CD8-positive, alpha-beta T cell (primary cell): ENCODE measurements at regions of chr15 and their contacts with region 1.

Region 1: DNA sequence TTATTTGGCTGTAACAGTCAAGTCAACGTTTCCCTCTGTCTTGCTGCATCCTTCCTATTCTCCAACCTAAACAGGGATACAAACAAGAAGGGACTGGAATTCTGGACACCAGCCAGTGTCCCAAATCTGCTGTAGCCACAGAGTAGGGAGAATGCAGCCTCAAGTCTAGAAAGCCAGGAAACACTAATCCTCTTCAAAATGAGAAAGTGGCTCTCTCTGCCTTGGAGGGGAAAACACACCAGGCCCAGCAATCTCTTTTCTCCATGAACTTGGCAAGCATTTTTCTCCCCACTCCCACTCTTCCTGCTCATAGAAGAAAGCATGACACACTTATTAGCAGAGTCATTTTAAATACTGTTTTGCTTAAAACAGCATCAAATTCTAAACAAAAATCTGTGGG is 781.7 kb downstream of the SQOR start:
- DNase-seq: no peak
- ATAC-seq: no peak
- H3K4me3 ChIP-seq: no peak overlapping the region
- H3K4me3 Mint-ChIP-seq: no peak overlapping the region
- H3K27ac ChIP-seq: no peak overlapping the region
- H3K27ac Mint-ChIP-seq: no peak overlapping the region
- H3K4me1 ChIP-seq: no peaks in the 10 kb centered on the region
- H3K4me1 Mint-ChIP-seq: no peaks in the 10 kb centered on the region
- H3K27me3 ChIP-seq: no peaks in the 10 kb centered on the region
- H3K27me3 Mint-ChIP-seq: no peaks in the 10 kb centered on the region
- CTCF ChIP-seq: no peak

Region 2: GRCh38 chr15:46354443-46354842 is 62.1 kb before region 1 on chr15:
- CTCF ChIA-PET with region 1: no interaction called
- POLR2A ChIA-PET with region 1: no interaction called
- intact Hi-C with region 1: loop called in 1 of 2 experiments (anchors 5 kb)
- DNase-seq: no peak
- ATAC-seq: no peak
- H3K4me3 ChIP-seq: no peak overlapping the region
- H3K4me3 Mint-ChIP-seq: no peak overlapping the region
- H3K27ac ChIP-seq: no peak overlapping the region
- H3K27ac Mint-ChIP-seq: no peak overlapping the region
- H3K4me1 ChIP-seq: no peaks in the 10 kb centered on the region
- H3K4me1 Mint-ChIP-seq: no peaks in the 10 kb centered on the region
- H3K27me3 ChIP-seq: no peaks in the 10 kb centered on the region
- H3K27me3 Mint-ChIP-seq: no peaks in the 10 kb centered on the region
- CTCF ChIP-seq: no peak